Sigmoid colon (tissue), 7 donors: ENCODE measurements at regions of chr15 and their contacts with region 1.

Region 1: GRCh38 chr15:67254238-67255175 is at the starts of genes AAGAB and IQCH:
- DNase-seq: peak; percentile 98
- H3K4me3 ChIP-seq: peak within 1 kb of the TSS; percentile 70 to 92 (median 80)
- H3K27ac ChIP-seq: peak within 1 kb of the TSS; percentile 86 to 93 (median 90)
- H3K4me1 ChIP-seq: peaks cover 0 to 17% (median 13%) of the 10 kb centered on the region in 4 donors
- H3K27me3 ChIP-seq: no peaks in the 10 kb centered on the region
- CTCF ChIP-seq: no peak
- EP300 ChIP-seq: no peak
- POLR2A ChIP-seq: peak; percentile 37 to 76
- total RNA-seq, gene AAGAB: 22.4 to 35.9 (median 29.3) TPM
- total RNA-seq, gene IQCH: 1.2 to 3.8 (median 1.4) TPM

Region 2: GRCh38 chr15:66946578-66947164 is 307.8 kb before region 1 on chr15:
- intact Hi-C with region 1: loop called (anchors 2 kb)
- DNase-seq: peak; percentile 75
- H3K4me3 ChIP-seq: no peak overlapping the region
- H3K27ac ChIP-seq: no peak overlapping the region
- H3K4me1 ChIP-seq: peaks cover 0 to under 1% (median 0%) of the 10 kb centered on the region in 4 donors
- H3K27me3 ChIP-seq: no peaks in the 10 kb centered on the region
- CTCF ChIP-seq: peak; percentile 87 to 93 (median 92)
- EP300 ChIP-seq: no peak
- POLR2A ChIP-seq: no peak

Region 3: GRCh38 chr15:67024314-67024997 is 230.1 kb before region 1 on chr15:
- intact Hi-C with region 1: loop called (anchors 10 kb)
- DNase-seq: peak; percentile 92
- H3K4me3 ChIP-seq: no peak overlapping the region
- H3K27ac ChIP-seq: peak overlapping the region; percentile 63 to 82 (median 78)
- H3K4me1 ChIP-seq: peaks cover 3 to 37% (median 33%) of the 10 kb centered on the region in 4 donors
- H3K27me3 ChIP-seq: no peaks in the 10 kb centered on the region
- CTCF ChIP-seq: no peak
- EP300 ChIP-seq: peak in 1 of 4 donors; percentile 53
- POLR2A ChIP-seq: no peak

Region 4: GRCh38 chr15:67065444-67066093 is 188.9 kb before region 1 on chr15 and contains the start of gene SMAD3:
- intact Hi-C with region 1: loop called (anchors 1 kb)
- DNase-seq: peak; percentile 96
- H3K4me3 ChIP-seq: peak within 1 kb of the TSS; percentile 55 to 90 (median 83)
- H3K27ac ChIP-seq: peak within 1 kb of the TSS; percentile 88 to 96 (median 94)
- H3K4me1 ChIP-seq: peaks cover 0 to 43% (median 37%) of the 10 kb centered on the region in 4 donors
- H3K27me3 ChIP-seq: no peaks in the 10 kb centered on the region
- CTCF ChIP-seq: no peak
- EP300 ChIP-seq: no peak
- POLR2A ChIP-seq: peak in 1 of 2 donors; percentile 42
- total RNA-seq, gene SMAD3: 17.8 to 28.2 (median 18.4) TPM

Region 5: DNA sequence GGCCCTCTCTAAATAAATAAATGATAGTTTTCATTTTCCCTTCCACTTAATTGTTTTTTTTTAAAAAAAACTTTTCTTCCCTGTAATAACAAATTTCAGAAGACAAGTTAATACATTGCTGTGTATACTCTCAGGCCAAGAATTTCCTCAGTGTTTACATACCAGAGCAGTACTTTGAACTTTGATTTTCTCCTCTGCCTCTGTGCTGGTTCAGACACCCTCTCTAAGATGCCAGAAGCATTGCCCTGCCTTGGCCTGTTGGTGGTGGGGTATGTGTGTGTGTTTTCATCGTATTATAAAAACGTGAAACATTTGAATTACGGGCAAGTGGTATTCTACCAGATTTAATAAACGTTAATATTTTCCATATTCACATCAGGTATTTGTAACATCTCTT is 119.0 kb before region 1 on chr15:
- intact Hi-C with region 1: loop called (anchors 5 kb)
- DNase-seq: peak; percentile 63
- H3K4me3 ChIP-seq: no peak overlapping the region
- H3K27ac ChIP-seq: peak overlapping the region; percentile 79 to 85 (median 84)
- H3K4me1 ChIP-seq: peaks cover 0 to 98% (median 96%) of the 10 kb centered on the region in 4 donors
- H3K27me3 ChIP-seq: no peaks in the 10 kb centered on the region
- CTCF ChIP-seq: peak in 2 of 4 experiments; percentile 9 to 29
- EP300 ChIP-seq: peak in 1 of 4 donors; percentile 8
- POLR2A ChIP-seq: no peak

Region 6: GRCh38 chr15:67175643-67176071 is 78.8 kb before region 1 on chr15:
- intact Hi-C with region 1: no loop called
- DNase-seq: peak; percentile 83
- H3K4me3 ChIP-seq: no peak overlapping the region
- H3K27ac ChIP-seq: peak overlapping the region; percentile 56 to 81 (median 76)
- H3K4me1 ChIP-seq: peaks cover 0 to 61% (median 49%) of the 10 kb centered on the region in 4 donors
- H3K27me3 ChIP-seq: no peaks in the 10 kb centered on the region
- CTCF ChIP-seq: no peak
- EP300 ChIP-seq: no peak
- POLR2A ChIP-seq: no peak

Region 7: DNA sequence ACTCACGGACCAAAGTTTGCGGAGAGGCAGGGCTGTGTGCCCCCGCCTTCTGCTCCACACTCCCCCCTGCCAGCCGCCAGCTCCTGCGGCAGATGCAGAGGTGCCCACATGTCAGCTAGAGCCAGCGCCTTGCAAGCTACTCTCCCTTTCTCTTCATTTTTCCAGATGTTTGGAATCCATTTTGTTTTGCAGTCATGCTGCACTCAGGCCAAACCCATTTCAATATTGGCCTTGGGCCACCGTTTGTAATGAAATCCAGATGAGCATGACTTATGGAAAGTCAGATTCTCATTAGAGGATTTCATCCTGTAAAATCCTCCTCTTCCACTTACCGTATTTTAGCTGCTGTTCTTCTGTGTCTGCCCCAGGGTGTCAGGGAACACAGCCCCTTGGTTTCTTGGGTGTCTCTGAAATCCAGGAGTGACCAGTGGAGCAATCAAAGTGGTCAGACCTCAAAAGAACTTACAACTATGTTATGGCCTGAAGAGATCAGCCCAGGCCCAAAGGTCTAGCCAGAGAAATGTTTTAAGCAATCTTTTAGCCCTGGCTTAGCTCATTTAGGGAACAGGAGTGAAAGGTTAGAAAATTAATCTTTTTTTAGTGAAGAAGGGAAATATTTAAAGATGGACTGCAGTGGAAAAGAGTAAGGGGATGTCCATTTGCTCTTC is 65.8 kb before region 1 on chr15:
- intact Hi-C with region 1: loop called (anchors 2 kb)
- DNase-seq: peak; percentile 88
- H3K4me3 ChIP-seq: no peak overlapping the region
- H3K27ac ChIP-seq: peak overlapping the region; percentile 74 to 87 (median 80)
- H3K4me1 ChIP-seq: peaks cover 0 to 77% (median 74%) of the 10 kb centered on the region in 4 donors
- H3K27me3 ChIP-seq: no peaks in the 10 kb centered on the region
- CTCF ChIP-seq: no peak
- EP300 ChIP-seq: peak in 2 of 4 donors; percentile 53 to 55
- POLR2A ChIP-seq: no peak

Region 8: GRCh38 chr15:67521029-67521811 is 266.7 kb after region 1 on chr15 and contains the start of gene C15orf61:
- intact Hi-C with region 1: loop called (anchors 10 kb)
- DNase-seq: peak; percentile 92
- H3K4me3 ChIP-seq: peak within 1 kb of the TSS; percentile 65 to 86 (median 84)
- H3K27ac ChIP-seq: peak within 1 kb of the TSS; percentile 92 to 98 (median 96)
- H3K4me1 ChIP-seq: peaks cover 0 to 27% (median 22%) of the 10 kb centered on the region in 4 donors
- H3K27me3 ChIP-seq: no peaks in the 10 kb centered on the region
- CTCF ChIP-seq: no peak
- EP300 ChIP-seq: no peak
- POLR2A ChIP-seq: peak; percentile 28 to 42
- total RNA-seq, gene C15orf61: 2.8 to 8.6 (median 5.7) TPM